ENCODE measurements at regions of chr14 and their contacts with region 1.

Region 1: GRCh38 chr14:64465191-64465822 is at the start of gene AKAP5:
- DNase-seq: peak; percentile 11
- ATAC-seq: peak; percentile 94
- H3K4me3 ChIP-seq: peak within 1 kb of the TSS; percentile 70
- H3K27ac ChIP-seq: peak within 1 kb of the TSS; percentile 5; the same call in 1 of the 2 replicates
- H3K4me1 ChIP-seq: no peaks in the 10 kb centered on the region; the same call in 1 of the 2 replicates
- H3K27me3 ChIP-seq: no peaks in the 10 kb centered on the region
- CTCF ChIP-seq: no peak
- POLR2A ChIP-seq: no peak
- RAD21 ChIP-seq: no peak
- total RNA-seq, gene AKAP5: 0.72 and 1.4 TPM in 2 replicates

Region 2: DNA sequence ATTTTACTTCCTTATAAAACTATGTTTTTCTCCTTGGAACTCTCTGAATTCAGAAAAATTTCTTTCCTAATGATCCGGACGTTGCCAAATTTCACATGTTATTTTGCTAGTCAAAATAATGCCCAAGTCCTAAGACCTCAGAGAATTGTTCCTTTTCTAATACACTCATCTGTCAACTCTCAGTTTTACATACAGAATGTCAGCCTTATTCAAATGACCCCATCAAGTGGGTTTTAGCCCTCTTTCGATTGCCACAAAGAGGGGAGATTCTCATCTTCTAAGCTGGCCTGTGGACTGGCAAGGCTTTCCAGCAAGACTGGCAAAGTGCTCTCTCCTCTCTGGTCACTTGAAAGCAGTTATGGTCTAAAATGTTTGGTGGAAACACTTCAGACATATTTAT is 1047.3 kb before region 1 on chr14:
- CTCF ChIA-PET with region 1: no interaction called
- POLR2A ChIA-PET with region 1: interaction called, 10 read pairs
- dilution Hi-C with region 1: no loop called
- in situ Hi-C with region 1: no loop called
- intact Hi-C with region 1: no loop called
- DNase-seq: no peak
- ATAC-seq: no peak
- H3K4me3 ChIP-seq: no peak overlapping the region
- H3K27ac ChIP-seq: no peak overlapping the region
- H3K4me1 ChIP-seq: no peaks in the 10 kb centered on the region
- H3K27me3 ChIP-seq: no peaks in the 10 kb centered on the region
- CTCF ChIP-seq: no peak
- POLR2A ChIP-seq: no peak
- RAD21 ChIP-seq: no peak

Region 3: DNA sequence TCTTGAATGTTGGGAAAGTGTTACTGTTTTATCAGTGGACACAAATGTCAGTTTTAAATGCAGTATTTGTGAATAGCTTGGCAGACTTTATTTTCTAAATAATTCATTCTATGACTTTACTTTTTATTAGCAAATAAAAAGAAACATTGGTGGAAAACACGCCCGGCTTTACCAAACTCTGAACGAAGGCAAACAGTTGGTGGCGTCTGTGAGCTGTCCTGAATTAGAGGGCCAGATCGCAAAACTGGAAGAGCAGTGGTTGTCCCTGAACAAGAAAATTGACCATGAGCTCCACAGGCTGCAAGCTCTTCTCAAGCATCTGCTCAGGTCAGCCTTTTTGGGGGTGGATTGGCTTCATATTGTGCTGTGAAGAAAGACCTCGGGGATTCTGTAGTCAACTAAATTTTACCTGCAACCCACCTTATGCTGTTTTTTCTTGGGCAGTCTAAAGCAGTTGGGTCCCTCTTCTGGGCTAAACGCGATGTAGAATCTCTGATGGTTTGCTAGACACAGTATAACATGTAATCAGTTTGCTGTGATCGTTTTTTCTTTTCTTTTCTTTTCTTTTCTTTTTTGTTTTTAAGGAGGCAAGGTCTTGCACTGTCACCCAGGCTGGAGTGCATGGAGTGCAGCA is 327.5 kb before region 1 on chr14:
- CTCF ChIA-PET with region 1: no interaction called
- POLR2A ChIA-PET with region 1: no interaction called
- dilution Hi-C with region 1: no loop called
- in situ Hi-C with region 1: no loop called
- intact Hi-C with region 1: no loop called
- DNase-seq: peak; percentile 8
- ATAC-seq: no peak
- H3K4me3 ChIP-seq: no peak overlapping the region
- H3K27ac ChIP-seq: no peak overlapping the region
- H3K4me1 ChIP-seq: no peaks in the 10 kb centered on the region
- H3K27me3 ChIP-seq: no peaks in the 10 kb centered on the region
- CTCF ChIP-seq: peak; percentile 35
- POLR2A ChIP-seq: no peak
- RAD21 ChIP-seq: 0 out of 2 replicates have a peak, but pooled peaks have one; percentile 25

Measured in IMR-90 (cell line).